IMR-90 (cell line): ENCODE measurements at regions of chr12 and their contacts with region 1.

Region 1: DNA sequence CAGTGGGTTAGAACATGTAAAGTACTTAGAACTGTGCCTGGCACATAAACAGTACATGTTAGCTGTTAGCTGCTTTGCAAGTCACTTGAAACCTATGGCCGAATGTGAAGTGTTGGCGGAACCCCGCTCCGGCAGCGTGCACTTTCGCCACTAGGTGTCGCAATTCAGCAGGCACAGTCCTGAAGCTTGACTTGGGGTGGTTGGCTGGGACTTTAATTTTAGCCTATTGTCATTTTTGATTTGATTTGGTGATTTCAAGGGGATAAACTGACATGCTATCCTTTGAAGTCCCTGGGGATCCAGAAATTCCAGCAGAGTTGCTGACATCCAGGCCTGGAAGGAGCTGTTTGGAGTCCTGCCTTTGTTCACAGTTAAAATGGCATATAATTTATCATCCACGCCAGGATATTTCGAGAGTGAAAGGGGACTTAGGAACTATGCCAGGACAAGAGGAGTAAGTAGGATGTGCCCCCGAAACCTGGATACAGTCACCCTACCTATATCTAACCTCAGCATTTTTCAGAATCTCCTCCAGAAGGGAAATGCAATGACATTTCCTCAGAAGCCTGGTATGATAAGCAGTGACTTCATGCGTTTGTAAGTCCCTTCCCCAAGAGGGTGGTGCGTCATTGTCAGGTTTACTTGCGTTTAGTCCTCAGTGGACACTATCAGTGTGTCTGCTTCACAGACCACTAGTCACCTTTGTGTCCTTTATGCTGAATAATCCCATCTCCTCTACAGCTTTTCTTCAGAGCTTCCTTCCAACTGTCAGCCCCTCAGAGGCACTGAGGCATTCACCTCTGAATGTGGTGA is 3.5 kb upstream of the TSPAN9 start:
- DNase-seq: peak; percentile 92
- ATAC-seq: peak; percentile 32
- H3K4me3 ChIP-seq: no peak overlapping the region
- H3K27ac ChIP-seq: no peak overlapping the region
- H3K4me1 ChIP-seq: peaks cover 14% of the 10 kb centered on the region
- H3K27me3 ChIP-seq: peaks cover 5% of the 10 kb centered on the region; the same call in 1 of the 2 replicates
- CTCF ChIP-seq: peak; percentile 97
- POLR2A ChIP-seq: no peak
- RAD21 ChIP-seq: peak; percentile 95

Region 2: DNA sequence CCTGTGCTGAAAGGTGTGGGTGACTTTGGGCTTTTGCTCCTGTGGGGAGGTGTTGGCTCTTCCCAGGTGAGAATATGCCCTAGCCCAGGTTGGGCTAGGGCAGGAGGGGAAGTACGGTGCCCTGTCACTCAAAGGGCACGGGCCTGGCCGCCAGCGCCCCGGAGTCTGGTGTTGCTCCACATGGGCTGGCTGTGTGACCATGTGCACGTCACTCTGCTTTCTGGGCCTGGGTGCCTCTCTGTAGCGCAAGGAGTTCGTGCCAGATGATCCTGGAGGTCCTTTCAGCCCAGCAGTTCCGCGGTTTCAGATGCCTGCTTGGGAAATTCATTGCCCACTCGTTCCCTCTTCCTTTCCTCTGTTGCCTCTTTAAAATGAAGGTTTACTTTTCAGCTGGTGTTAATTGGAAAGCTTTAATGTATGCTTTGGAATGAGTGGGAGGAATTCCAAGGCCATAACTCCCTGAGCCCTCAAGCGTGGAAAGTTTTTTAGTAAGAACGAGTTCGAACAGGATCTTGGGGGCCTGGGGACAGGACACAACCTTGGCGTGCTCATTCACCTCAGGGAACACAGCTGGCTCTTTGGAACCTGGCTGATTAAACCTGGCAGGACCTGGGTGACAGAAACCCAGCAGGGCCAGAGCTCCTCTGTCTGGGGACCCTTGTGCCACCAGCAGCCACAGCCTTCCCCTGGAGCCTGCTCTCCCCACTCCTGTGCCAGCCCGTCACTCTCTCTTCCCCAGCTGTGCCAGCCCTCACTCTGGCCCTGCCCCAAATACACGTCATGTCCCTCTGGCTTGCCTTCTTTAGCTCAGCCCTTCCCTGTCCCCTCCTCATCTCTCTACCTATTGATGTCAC is 46.3 kb after region 1 on chr12:
- CTCF ChIA-PET with region 1: interaction called, 6 read pairs
- POLR2A ChIA-PET with region 1: no interaction called
- dilution Hi-C with region 1: no loop called
- in situ Hi-C with region 1: no loop called
- intact Hi-C with region 1: loop called (anchors 5 kb)
- DNase-seq: peak; percentile 6
- ATAC-seq: no peak
- H3K4me3 ChIP-seq: no peak overlapping the region
- H3K27ac ChIP-seq: no peak overlapping the region
- H3K4me1 ChIP-seq: peaks cover 31% of the 10 kb centered on the region
- H3K27me3 ChIP-seq: no peaks in the 10 kb centered on the region
- CTCF ChIP-seq: no peak
- POLR2A ChIP-seq: no peak
- RAD21 ChIP-seq: no peak

Region 3: GRCh38 chr12:3275171-3276041 is 201.8 kb after region 1 on chr12:
- CTCF ChIA-PET with region 1: interaction called, 25 read pairs
- POLR2A ChIA-PET with region 1: no interaction called
- dilution Hi-C with region 1: no loop called
- in situ Hi-C with region 1: loop called (anchors 5 kb)
- intact Hi-C with region 1: loop called (anchors 1 kb)
- DNase-seq: peak; percentile 66
- ATAC-seq: peak; percentile 89
- H3K4me3 ChIP-seq: no peak overlapping the region
- H3K27ac ChIP-seq: no peak overlapping the region
- H3K4me1 ChIP-seq: 0 out of 2 replicates have a peak, but pooled peaks cover 2% of the 10 kb centered on the region
- H3K27me3 ChIP-seq: no peaks in the 10 kb centered on the region
- CTCF ChIP-seq: peak; percentile 98
- POLR2A ChIP-seq: peak; percentile 52; the same call in 1 of the 2 replicates
- RAD21 ChIP-seq: peak; percentile 98